Activated CD4-positive, alpha-beta memory T cell treated with anti-CD3 and anti-CD28 coated beads, Interleukin-2, amount 10 ng/mL, durations not matched to agents 7 days and 5 days (primary cell): ENCODE measurements at regions of chr14 and their contacts with region 1.

Region 1: DNA sequence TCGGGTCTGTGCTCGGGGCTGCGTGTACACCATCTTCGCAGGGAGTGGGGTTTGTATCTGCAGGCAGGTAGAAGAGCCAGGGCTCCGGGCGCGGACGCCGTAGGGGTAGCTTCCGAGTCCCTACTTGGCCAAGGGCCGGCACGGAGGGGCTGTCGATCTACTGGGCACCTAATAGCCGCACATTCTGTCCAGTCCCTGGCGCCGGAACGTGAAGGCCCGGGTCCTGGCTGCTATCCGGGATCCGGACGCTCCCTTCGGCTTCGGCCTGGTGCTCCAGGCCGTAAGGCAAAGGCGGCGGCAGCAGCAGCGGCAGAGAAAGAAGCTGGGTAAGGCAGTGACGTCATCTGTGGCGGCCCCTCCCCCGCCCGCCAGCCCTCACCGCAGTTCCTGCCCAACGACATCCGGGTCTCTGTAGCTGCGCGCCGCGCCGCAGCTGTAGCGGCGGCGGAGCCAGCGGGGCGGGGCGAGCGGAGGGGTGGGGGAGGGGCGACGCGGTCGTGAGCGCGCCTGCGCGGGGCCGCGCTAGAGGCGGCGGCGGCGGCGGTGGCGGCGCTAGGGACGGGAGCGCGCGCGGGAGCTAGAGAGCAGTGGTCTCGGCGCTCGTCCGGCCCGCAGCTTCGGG is at the start of gene PPM1A:
- DNase-seq: peak; percentile 95
- H3K4me3 Mint-ChIP-seq: peak within 1 kb of the TSS; percentile 87
- H3K27ac Mint-ChIP-seq: peak within 1 kb of the TSS; percentile 99
- H3K4me1 Mint-ChIP-seq: peaks cover 45% of the 10 kb centered on the region
- H3K27me3 Mint-ChIP-seq: no peaks in the 10 kb centered on the region
- total RNA-seq, gene PPM1A: 54.5 to 55.2 TPM

Region 2: GRCh38 chr14:60091550-60092530 is 157.0 kb before region 1 on chr14 and contains the start of gene PCNX4:
- CTCF ChIA-PET with region 1: interaction called, 5 read pairs
- POLR2A ChIA-PET with region 1: interaction called, 62 read pairs
- DNase-seq: peak; percentile 95
- H3K4me3 Mint-ChIP-seq: peak within 1 kb of the TSS; percentile 94
- H3K27ac Mint-ChIP-seq: peak within 1 kb of the TSS; percentile 96
- H3K4me1 Mint-ChIP-seq: peaks cover 41% of the 10 kb centered on the region
- H3K27me3 Mint-ChIP-seq: no peaks in the 10 kb centered on the region
- total RNA-seq, gene PCNX4: 32.6 to 34.7 TPM

Region 3: DNA sequence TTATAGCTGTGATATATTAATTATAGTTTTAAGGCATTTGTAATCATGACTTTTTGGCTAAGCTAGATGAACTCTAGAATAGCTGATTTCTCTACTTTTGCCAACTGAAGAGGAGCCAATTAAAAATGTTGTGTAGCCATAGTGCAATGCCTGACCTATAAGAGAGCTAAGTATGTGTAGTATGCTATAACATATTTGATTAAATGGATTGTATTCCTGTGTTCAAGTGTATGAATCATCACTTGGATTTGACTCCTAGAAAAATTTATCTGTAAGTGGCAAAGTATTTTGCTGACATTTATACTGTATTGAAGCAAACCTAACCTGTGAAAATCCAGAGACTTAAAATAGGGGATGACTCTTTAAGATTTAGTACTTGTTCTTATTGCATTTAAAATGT is 122.9 kb before region 1 on chr14:
- CTCF ChIA-PET with region 1: no interaction called
- POLR2A ChIA-PET with region 1: no interaction called
- DNase-seq: no peak
- H3K4me3 Mint-ChIP-seq: no peak overlapping the region
- H3K27ac Mint-ChIP-seq: no peak overlapping the region
- H3K4me1 Mint-ChIP-seq: peaks cover 9% of the 10 kb centered on the region
- H3K27me3 Mint-ChIP-seq: no peaks in the 10 kb centered on the region

Region 4: DNA sequence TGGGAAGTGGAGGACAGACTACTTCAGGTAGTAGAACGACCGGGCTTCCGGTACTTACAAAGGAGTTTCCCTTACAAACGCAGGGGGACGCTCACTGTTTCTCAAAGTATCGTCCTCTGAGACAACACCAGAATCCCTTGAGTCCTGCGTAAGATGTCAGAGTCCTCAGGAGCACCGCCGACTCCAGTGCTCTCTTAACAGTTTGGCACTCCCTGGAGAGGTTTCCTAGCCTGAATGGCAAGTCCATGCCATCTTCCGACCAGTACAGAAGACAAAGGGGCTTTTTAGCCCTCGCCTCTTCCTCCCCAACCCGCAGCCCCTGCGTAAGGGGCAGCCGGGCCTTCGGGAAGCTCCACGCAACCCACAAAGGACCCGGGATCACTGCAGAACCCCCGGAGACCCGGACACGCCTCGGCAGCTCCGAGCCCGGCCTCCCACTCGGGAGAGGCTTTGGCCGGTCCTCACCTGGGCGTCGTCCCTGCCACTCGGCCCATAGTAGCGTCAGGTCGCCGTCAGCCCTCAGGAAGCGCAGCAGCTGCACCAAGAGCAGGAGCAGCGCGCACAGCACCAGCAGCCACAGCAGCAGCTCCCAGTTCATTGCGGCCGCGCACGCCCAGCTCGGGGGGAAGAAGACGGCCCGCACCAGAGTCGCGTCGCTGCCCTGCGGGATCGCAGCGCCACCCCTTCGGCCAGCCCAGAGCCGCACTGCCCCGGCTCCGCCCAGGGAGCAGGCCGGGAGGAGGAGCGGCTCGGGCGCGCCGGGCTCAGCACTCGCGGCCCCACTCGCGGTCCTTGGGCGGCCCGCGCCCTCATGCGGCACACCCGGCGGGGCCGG is 83.9 kb before region 1 on chr14 and contains the start of gene DHRS7:
- CTCF ChIA-PET with region 1: interaction called, 8 read pairs
- POLR2A ChIA-PET with region 1: interaction called, 40 read pairs
- DNase-seq: peak; percentile 68
- H3K4me3 Mint-ChIP-seq: peak within 1 kb of the TSS; percentile 91
- H3K27ac Mint-ChIP-seq: peak within 1 kb of the TSS; percentile 94
- H3K4me1 Mint-ChIP-seq: peaks cover 35% of the 10 kb centered on the region
- H3K27me3 Mint-ChIP-seq: no peaks in the 10 kb centered on the region
- total RNA-seq, gene DHRS7: 76.5 to 77.9 TPM

Region 5: DNA sequence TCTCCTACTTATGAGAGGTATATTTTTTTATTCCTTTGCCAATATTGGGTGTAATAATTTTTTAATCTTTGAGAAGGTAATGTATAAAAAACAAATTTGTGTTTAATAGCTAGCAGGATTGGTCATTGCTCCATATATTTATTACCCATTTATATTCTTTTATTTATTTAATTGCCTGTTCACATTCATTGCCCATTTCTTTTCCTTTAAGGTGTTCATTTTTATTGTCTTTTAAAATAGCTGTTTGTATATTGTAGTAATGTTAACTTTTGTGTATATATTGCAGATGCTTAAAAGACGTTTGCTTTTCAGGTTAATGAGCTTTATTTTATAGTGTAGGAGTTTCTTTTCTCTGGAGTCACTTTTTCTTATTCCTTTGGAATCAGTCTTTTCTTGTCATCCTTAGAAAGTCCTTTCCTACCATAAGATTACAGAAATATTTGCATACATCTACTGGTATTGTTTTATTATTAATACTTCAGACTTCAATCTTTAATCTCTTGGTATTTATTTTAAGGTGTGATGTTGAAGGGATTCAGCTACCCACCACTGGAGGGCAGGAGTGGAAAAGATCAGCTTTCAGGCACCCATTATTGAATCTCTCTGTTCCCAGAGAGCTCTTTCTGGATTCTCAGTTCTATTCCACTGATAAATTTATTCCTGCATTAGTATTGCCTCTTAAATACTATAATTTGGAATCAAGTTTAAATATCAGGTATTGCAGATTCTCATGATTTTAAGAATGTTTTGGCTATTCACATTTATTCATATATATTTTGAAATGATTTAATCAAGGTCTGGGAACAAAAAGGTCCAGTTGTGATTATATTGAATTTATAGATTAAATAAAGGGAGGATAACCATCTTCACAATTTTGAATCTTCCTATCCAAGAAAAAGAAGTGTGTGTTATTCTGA is 17.5 kb after region 1 on chr14:
- CTCF ChIA-PET with region 1: interaction called, 13 read pairs
- POLR2A ChIA-PET with region 1: interaction called, 7 read pairs
- DNase-seq: no peak
- H3K4me3 Mint-ChIP-seq: no peak overlapping the region
- H3K27ac Mint-ChIP-seq: no peak overlapping the region
- H3K4me1 Mint-ChIP-seq: peaks cover 2% of the 10 kb centered on the region
- H3K27me3 Mint-ChIP-seq: no peaks in the 10 kb centered on the region